PC-9 (cell line): ENCODE measurements at regions of chr2 and their contacts with region 1.

Region 1: GRCh38 chr2:232592772-232593395 is 40.5 kb upstream of the EFHD1 start:
- DNase-seq: peak; percentile 59 to 95
- H3K4me3 ChIP-seq: peak overlapping the region; percentile 20; the same call in 1 of the 2 replicates
- H3K27ac ChIP-seq: peak overlapping the region; percentile 69
- H3K4me1 ChIP-seq: peaks cover 36% of the 10 kb centered on the region
- H3K27me3 ChIP-seq: no peaks in the 10 kb centered on the region
- CTCF ChIP-seq: peak; percentile 50; the same call in 1 of the 2 replicates

Region 2: DNA sequence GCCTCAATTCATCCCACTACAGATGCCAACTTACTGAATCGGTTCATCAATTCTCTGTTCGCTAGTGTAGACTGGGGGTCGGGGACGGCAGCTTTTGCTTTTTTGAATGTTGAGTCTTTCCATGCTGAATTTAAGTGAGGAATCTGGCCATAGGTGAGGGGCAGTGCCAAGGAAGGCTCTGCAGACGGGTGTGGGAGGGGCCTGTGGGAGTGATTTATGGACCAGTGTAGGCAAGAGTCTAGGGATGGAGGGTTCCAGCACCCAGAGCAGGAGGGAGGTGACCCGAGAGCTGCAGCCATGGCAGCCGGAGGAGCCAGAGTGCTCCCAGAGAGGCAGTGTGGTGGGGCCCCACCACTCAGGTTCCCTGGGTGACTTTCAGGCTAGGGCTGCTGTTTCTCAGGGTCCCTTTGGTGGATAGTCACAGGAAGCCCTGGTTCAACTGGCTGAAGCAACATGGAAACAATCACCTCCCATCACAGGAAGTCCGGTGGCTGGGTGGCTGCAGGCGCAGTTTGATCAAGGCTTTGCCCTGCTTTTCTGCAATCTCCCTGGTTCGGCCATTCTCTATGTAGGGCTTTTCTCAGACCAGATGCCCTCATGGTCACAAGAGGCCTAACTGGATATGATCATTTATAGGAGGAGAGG is 1017.1 kb before region 1 on chr2:
- CTCF ChIA-PET with region 1: no interaction called
- POLR2A ChIA-PET with region 1: no interaction called
- intact Hi-C with region 1: no loop called
- DNase-seq: no peak
- H3K4me3 ChIP-seq: no peak overlapping the region
- H3K27ac ChIP-seq: no peak overlapping the region
- H3K4me1 ChIP-seq: no peaks in the 10 kb centered on the region
- H3K27me3 ChIP-seq: peaks cover 10% of the 10 kb centered on the region
- CTCF ChIP-seq: no peak

Region 3: DNA sequence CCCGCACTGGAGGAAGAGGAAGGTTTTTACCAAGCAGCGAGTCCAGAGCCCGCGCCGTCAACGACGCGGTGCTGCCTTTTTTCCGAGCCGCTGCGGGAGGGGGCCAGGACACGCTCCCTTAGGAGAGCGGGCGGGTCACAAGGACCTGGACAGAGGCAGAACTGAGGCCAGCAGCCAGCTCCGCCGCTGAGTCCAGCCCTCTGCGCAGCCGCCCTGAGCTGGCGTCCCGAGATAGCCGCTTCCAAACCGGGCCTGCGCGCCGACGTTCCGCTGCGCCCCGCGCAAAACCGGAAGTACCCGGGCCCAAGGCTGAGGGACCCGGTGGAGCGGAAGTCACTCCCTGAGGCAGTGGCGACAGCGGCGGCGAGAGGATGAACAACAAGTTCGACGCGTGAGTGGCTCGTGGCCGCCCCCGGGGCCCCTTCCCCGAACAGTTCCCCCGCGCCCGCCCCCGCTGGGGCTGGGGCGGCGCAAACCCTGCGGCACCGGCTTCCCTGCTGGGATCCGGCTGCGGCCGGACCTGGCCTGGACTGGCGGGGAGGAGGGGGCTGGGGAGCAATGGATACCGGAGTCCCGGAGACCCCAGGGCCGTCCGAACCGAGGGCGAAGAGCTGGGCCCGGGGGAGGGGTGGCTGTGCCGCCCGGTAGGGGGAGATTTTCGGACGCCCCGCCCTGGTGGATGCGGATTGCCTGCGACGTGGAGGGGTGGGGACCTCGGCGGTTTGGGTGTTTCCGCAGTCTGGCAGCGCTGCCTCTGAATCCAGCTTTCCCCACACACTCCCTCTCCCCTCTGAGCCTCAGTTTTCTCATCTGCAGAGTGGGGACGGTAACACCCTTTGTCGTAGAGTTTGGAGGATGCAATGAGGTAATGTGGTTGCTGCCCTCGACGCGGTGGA is 42.3 kb before region 1 on chr2 and contains the starts of genes EIF4E2 and TIGD1:
- CTCF ChIA-PET with region 1: no interaction called
- POLR2A ChIA-PET with region 1: no interaction called
- intact Hi-C with region 1: loop called (anchors 2 kb)
- DNase-seq: peak; percentile 81 to 95
- H3K4me3 ChIP-seq: peak within 1 kb of the TSS; percentile 87
- H3K27ac ChIP-seq: peak within 1 kb of the TSS; percentile 89
- H3K4me1 ChIP-seq: peaks cover 13% of the 10 kb centered on the region
- H3K27me3 ChIP-seq: no peaks in the 10 kb centered on the region
- CTCF ChIP-seq: no peak; the same call in 1 of the 2 replicates
- total RNA-seq, gene EIF4E2: 69.3 and 69.6 TPM in 2 replicates
- total RNA-seq, gene TIGD1: 12.7 and 14.7 TPM in 2 replicates

Region 4: DNA sequence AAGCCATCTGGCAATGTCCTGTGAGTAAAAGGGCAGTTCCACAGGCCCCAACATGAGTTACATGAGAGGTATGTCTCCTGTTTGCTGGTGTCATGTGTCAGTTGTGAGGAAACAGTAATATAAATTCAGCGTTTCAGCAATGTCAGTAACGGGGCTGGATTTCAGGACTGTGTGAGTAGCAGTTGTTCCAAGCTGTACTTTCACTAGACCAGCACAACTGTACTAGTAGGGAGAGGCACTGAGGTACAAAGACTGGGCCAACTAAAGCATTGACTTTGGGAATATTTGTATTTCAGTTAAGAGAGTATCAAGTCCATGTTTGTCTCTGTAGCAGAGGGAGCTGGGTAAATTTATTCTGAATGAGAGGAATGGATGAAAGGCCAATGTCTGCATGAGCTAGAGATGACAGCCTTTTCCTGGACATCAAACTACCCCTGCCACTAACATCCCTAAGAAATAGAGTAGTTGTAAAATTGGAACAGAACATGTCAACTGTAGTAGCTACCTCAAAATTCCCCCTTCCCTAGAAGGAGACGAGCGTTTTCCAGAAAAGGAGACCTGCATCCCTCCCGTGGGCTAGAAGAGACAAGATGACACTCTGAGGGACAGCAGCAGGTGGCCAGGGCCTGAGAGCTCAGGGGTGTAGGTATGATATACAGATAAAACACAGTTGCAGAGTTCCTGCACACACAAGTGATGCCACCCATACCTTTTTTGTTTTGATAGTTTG is 18.0 kb before region 1 on chr2:
- CTCF ChIA-PET with region 1: no interaction called
- POLR2A ChIA-PET with region 1: no interaction called
- intact Hi-C with region 1: no loop called
- DNase-seq: no peak
- H3K4me3 ChIP-seq: no peak overlapping the region
- H3K27ac ChIP-seq: no peak overlapping the region
- H3K4me1 ChIP-seq: no peaks in the 10 kb centered on the region
- H3K27me3 ChIP-seq: no peaks in the 10 kb centered on the region
- CTCF ChIP-seq: no peak

Region 5: GRCh38 chr2:232781765-232782164 is 188.9 kb after region 1 on chr2:
- CTCF ChIA-PET with region 1: no interaction called
- POLR2A ChIA-PET with region 1: interaction called, 11 read pairs
- intact Hi-C with region 1: no loop called
- DNase-seq: peak; percentile 20 to 94
- H3K4me3 ChIP-seq: no peak overlapping the region
- H3K27ac ChIP-seq: peak overlapping the region; percentile 57
- H3K4me1 ChIP-seq: peaks cover 11% of the 10 kb centered on the region
- H3K27me3 ChIP-seq: no peaks in the 10 kb centered on the region
- CTCF ChIP-seq: no peak

Region 6: GRCh38 chr2:232843834-232844233 is 250.9 kb after region 1 on chr2:
- CTCF ChIA-PET with region 1: no interaction called
- POLR2A ChIA-PET with region 1: no interaction called
- intact Hi-C with region 1: no loop called
- DNase-seq: no peak
- H3K4me3 ChIP-seq: no peak overlapping the region
- H3K27ac ChIP-seq: no peak overlapping the region
- H3K4me1 ChIP-seq: peaks cover 5% of the 10 kb centered on the region
- H3K27me3 ChIP-seq: no peaks in the 10 kb centered on the region
- CTCF ChIP-seq: peak; percentile 28